CD14-positive monocyte (primary cell): ENCODE measurements at regions of chr16 and their contacts with region 1.

Region 1: GRCh38 chr16:71808593-71809459 is at the start of gene AP1G1:
- DNase-seq: peak; percentile 97 to 98 (median 97)
- H3K4me3 ChIP-seq: peak within 1 kb of the TSS; percentile 79 to 95 (median 92)
- H3K4me3 Mint-ChIP-seq: peak within 1 kb of the TSS; percentile 96
- H3K27ac ChIP-seq: peak within 1 kb of the TSS; percentile 97 to 99
- H3K27ac Mint-ChIP-seq: peak within 1 kb of the TSS; percentile 98 to 100 (median 100)
- H3K4me1 ChIP-seq: peaks cover 23 to 27% of the 10 kb centered on the region in 2 donors
- H3K4me1 Mint-ChIP-seq: peaks cover 35% of the 10 kb centered on the region
- H3K27me3 ChIP-seq: no peaks in the 10 kb centered on the region
- H3K27me3 Mint-ChIP-seq: no peaks in the 10 kb centered on the region
- CTCF ChIP-seq: no peak
- polyA plus RNA-seq, gene AP1G1: 6.7 to 43.8 (median 10.7) TPM

Region 2: GRCh38 chr16:71723537-71724319 is 85.1 kb before region 1 on chr16:
- intact Hi-C with region 1: loop called in 1 of 2 experiments (anchors 10 kb)
- DNase-seq: peak; percentile 37 to 73 (median 71)
- H3K4me3 ChIP-seq: peak overlapping the region; percentile 43 to 81 (median 50)
- H3K4me3 Mint-ChIP-seq: peak overlapping the region; percentile 88 to 92
- H3K27ac ChIP-seq: no peak overlapping the region
- H3K27ac Mint-ChIP-seq: peak overlapping the region in 1 of 7 donors; percentile 65
- H3K4me1 ChIP-seq: peaks cover 44 to 48% of the 10 kb centered on the region in 2 donors
- H3K4me1 Mint-ChIP-seq: peaks cover 43% of the 10 kb centered on the region
- H3K27me3 ChIP-seq: peaks cover 9 to 19% of the 10 kb centered on the region in 2 donors
- H3K27me3 Mint-ChIP-seq: peaks cover 18 to 28% (median 20%) of the 10 kb centered on the region in 3 donors
- CTCF ChIP-seq: no peak

Region 3: GRCh38 chr16:71762186-71762585 is 46.6 kb before region 1 on chr16:
- intact Hi-C with region 1: no loop called
- DNase-seq: no peak
- H3K4me3 ChIP-seq: no peak overlapping the region
- H3K4me3 Mint-ChIP-seq: no peak overlapping the region
- H3K27ac ChIP-seq: no peak overlapping the region
- H3K27ac Mint-ChIP-seq: peak overlapping the region in 1 of 7 donors; percentile 30
- H3K4me1 ChIP-seq: no peaks in the 10 kb centered on the region
- H3K4me1 Mint-ChIP-seq: no peaks in the 10 kb centered on the region
- H3K27me3 ChIP-seq: no peaks in the 10 kb centered on the region
- H3K27me3 Mint-ChIP-seq: no peaks in the 10 kb centered on the region
- CTCF ChIP-seq: no peak

Region 4: DNA sequence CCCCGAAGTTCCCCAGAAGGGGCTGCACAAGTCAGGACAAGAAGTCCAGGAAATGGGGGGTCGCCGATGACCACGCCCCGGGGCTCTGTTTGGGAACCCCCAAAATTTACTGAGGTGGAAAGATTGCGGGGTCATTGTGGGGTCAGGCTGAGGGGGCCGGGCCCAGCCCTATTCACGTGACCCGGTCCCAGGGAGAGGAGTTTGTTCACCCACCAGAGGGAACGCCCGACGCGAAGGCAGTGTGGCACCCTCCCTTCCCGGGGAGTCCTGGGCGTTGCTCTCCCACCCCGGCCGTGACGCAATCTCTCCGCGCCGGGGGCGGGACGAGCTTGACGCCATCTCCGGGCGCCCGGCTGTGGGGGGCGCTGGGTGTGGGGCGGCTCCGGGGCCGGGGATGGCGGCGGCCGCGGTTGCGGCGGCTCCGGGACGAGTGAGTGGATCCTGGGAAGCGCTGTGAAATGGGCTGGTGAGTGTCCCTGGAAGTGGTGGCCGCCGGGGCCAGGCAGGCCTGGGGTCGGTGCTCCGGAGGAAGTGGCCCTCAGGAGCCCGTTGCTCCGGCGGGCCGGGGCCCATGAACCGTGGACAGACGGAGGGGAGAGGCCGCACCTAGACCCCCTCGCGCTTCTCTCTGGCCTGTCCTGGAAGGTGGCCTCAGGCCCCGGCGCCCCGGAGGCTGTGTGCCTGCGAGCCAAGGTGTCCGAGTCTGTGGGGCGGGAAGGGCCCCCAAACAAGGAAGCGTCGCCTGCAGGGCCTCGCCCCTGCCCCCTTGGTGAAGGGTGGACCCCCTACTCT is 37.0 kb after region 1 on chr16 and contains the start of gene ATXN1L:
- intact Hi-C with region 1: loop called (anchors 2 kb)
- DNase-seq: peak; percentile 85 to 96 (median 95)
- H3K4me3 ChIP-seq: peak within 1 kb of the TSS; percentile 74 to 98 (median 90)
- H3K4me3 Mint-ChIP-seq: peak within 1 kb of the TSS; percentile 90 to 93
- H3K27ac ChIP-seq: peak within 1 kb of the TSS; percentile 55 to 96
- H3K27ac Mint-ChIP-seq: peak within 1 kb of the TSS; percentile 91 to 98 (median 97)
- H3K4me1 ChIP-seq: peaks cover 13 to 21% of the 10 kb centered on the region in 2 donors
- H3K4me1 Mint-ChIP-seq: peaks cover 20% of the 10 kb centered on the region
- H3K27me3 ChIP-seq: no peaks in the 10 kb centered on the region
- H3K27me3 Mint-ChIP-seq: peaks cover 0 to 4% (median 2%) of the 10 kb centered on the region in 3 donors
- CTCF ChIP-seq: no peak
- polyA plus RNA-seq, gene ATXN1L: 6.7 to 27.9 (median 10.0) TPM

Region 5: DNA sequence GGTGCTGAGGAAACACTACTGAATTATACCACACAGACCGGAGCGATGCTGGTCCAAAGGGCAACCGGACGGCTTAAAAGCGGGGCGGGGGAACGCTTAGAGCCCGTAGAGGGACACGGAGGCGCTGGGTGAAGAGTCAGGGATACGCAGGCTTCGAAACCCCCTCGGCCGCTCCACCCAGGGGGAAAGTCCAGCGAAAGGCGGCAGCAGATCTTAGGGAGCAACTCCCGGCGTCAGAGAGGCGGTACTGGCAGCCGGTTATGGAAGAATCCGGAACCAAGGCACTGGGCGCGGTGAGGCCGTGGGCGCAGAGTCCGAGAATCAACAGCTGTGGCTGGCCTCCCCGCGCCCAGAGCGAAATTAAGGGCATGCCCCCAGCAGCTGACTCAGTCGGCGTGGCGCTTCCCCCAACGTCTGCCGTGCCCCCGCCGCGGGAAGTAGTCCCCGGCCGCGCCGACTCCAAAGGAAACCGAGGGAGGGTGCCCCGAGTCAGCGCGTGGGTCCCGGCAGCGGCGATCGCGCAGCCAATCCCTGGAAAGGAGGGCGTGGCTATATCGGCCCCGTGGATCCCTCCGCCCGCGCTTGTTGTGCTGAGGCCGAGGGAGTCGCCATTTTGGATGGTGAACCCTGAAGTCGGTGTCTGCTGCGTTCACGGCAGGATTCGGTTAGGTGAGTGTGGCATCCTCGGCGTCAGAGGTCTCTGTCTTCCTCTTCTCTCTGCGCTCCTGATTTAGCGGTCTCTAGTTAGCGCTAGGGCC is 86.3 kb after region 1 on chr16 and contains the start of gene IST1:
- intact Hi-C with region 1: loop called (anchors 2 to 5 kb)
- DNase-seq: peak; percentile 97 to 98 (median 98)
- H3K4me3 ChIP-seq: peak within 1 kb of the TSS; percentile 68 to 98 (median 78)
- H3K4me3 Mint-ChIP-seq: peak within 1 kb of the TSS; percentile 98 to 99
- H3K27ac ChIP-seq: peak within 1 kb of the TSS; percentile 91 to 93
- H3K27ac Mint-ChIP-seq: peak within 1 kb of the TSS; percentile 96 to 99 (median 99)
- H3K4me1 ChIP-seq: peaks cover 29 to 50% of the 10 kb centered on the region in 2 donors
- H3K4me1 Mint-ChIP-seq: peaks cover 39% of the 10 kb centered on the region
- H3K27me3 ChIP-seq: no peaks in the 10 kb centered on the region
- H3K27me3 Mint-ChIP-seq: peaks cover 0 to 1% (median 0%) of the 10 kb centered on the region in 3 donors
- CTCF ChIP-seq: no peak
- polyA plus RNA-seq, gene IST1: 81.3 to 233 (median 102) TPM

Region 6: DNA sequence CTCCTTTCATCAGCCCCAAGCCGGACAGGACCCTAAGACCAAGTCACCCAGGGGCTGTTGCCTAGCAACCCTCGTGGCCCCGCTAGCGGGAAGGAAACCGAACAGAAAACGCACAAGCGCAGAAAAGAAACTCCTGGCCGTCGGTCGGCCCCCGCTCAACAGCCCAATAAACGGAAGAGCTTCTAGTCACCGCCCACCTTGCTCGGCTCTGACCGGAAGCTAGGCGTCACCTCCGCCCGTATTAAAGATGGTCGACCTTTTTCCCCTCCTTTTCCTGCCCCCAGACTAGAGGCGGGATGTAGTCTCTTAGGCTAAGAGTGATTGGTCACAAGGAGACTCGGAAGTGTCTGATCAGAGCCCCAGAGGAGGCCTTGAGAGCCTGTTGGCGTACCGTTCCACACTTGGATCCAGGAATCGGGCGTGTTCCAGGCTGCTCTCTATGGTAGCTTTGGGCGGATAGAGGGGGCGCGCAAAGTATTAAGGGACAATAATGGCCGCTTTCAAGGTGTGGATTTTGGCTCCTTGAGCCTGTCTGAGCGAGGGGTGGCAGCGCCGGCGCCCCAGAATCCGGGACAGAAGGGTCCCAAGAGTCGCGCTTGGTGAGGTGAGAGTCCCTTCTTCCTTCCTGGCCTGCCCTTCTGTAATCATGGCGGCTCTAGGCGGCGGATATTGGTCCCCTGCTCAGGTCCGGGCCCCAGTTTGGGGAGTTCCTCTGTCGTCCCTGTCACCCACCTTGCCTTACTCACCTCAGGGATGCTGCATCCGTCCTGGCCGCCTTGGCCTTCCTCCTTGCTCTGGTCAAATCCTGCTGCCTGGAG is 284.8 kb after region 1 on chr16 and contains the starts of genes DHX38 and TXNL4B:
- intact Hi-C with region 1: loop called in 1 of 2 experiments (anchors 5 kb)
- DNase-seq: peak; percentile 96 to 98 (median 96)
- H3K4me3 ChIP-seq: peak within 1 kb of the TSS; percentile 75 to 100 (median 80)
- H3K4me3 Mint-ChIP-seq: peak within 1 kb of the TSS; percentile 93 to 97
- H3K27ac ChIP-seq: peak within 1 kb of the TSS; percentile 83 to 93
- H3K27ac Mint-ChIP-seq: peak within 1 kb of the TSS; percentile 91 to 98 (median 96)
- H3K4me1 ChIP-seq: peaks cover 22 to 39% of the 10 kb centered on the region in 2 donors
- H3K4me1 Mint-ChIP-seq: peaks cover 35% of the 10 kb centered on the region
- H3K27me3 ChIP-seq: no peaks in the 10 kb centered on the region
- H3K27me3 Mint-ChIP-seq: no peaks in the 10 kb centered on the region
- CTCF ChIP-seq: no peak
- polyA plus RNA-seq, gene DHX38: 9.1 to 91.5 (median 19.2) TPM
- polyA plus RNA-seq, gene TXNL4B: 6.4 to 10.9 (median 7.0) TPM